BJ (cell line): ENCODE measurements at regions of chr6 and their contacts with region 1.

Region 1: GRCh38 chr6:37343248-37343647 is 10.5 kb upstream of the RNF8 start:
- DNase-seq: no peak
- H3K4me3 ChIP-seq: no peak overlapping the region
- H3K27me3 ChIP-seq: peaks cover 2% of the 10 kb centered on the region
- CTCF ChIP-seq: no peak

Region 2: DNA sequence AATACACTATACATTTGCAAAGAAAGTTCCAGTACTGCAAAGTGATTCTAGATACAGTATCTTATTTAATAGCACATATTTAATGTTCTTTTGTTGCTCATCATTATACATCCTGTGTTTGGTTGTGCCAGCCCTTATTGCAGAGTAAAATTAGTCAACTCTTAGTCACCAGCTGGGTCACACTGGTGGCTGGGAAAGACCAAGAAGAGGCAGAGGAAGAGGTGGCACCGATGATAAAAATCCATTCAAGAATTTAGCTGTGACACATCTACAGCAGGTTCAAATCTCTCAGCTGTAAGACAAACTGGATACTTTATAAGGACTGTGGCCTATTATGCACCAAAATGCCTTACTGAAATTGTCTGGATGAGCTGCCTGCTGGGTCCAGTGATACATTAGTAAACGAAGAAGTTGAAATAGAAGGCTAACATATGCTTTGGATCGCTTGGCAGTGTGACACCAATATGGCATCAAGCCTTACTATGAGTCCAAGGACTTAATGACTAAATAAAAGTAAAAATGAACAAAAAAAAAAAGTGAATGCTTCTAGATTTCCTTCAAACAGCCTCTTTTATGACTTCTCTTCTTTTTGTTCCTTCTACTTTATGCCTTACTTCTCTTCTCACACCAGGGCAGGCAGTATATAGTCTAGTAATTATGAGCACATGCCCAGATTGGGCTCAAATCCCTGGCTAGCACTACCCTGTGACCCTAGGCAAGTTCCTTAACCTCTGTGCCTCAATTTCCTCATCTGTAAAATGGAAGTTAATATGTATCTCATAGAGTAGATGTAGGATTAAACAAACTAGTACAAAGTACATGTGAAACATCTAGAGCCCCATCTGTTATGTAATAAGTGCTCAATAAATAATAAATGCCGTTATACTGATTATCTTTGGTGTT is 18.9 kb before region 1 on chr6:
- CTCF ChIA-PET with region 1: interaction called, 15 read pairs
- POLR2A ChIA-PET with region 1: no interaction called
- DNase-seq: no peak
- H3K4me3 ChIP-seq: no peak overlapping the region
- H3K27me3 ChIP-seq: no peaks in the 10 kb centered on the region
- CTCF ChIP-seq: no peak

Region 3: GRCh38 chr6:37396476-37397180 is 53.4 kb after region 1 on chr6:
- CTCF ChIA-PET with region 1: no interaction called
- POLR2A ChIA-PET with region 1: no interaction called
- DNase-seq: peak; percentile 9
- H3K4me3 ChIP-seq: no peak overlapping the region
- H3K27me3 ChIP-seq: 0 out of 2 replicates have a peak, but pooled peaks cover 2% of the 10 kb centered on the region
- CTCF ChIP-seq: no peak